HEK293 (cell line): ENCODE measurements at regions of chr6 and their contacts with region 1.

Region 1: GRCh38 chr6:8481718-8482117 is 46.4 kb upstream of the SLC35B3 start:
- H3K4me3 ChIP-seq: no peak overlapping the region
- H3K27ac ChIP-seq: no peak overlapping the region
- H3K4me1 ChIP-seq: no peaks in the 10 kb centered on the region
- CTCF ChIP-seq: no peak

Region 2: GRCh38 chr6:8277769-8278168 is 203.9 kb before region 1 on chr6:
- CTCF ChIA-PET with region 1: no interaction called
- POLR2A ChIA-PET with region 1: no interaction called
- H3K4me3 ChIP-seq: no peak overlapping the region
- H3K27ac ChIP-seq: no peak overlapping the region
- H3K4me1 ChIP-seq: no peaks in the 10 kb centered on the region; the same call in 1 of the 2 replicates
- CTCF ChIP-seq: no peak

Region 3: GRCh38 chr6:8492536-8493133 is 10.9 kb after region 1 on chr6:
- CTCF ChIA-PET with region 1: interaction called, 10 read pairs
- POLR2A ChIA-PET with region 1: no interaction called
- H3K4me3 ChIP-seq: no peak overlapping the region
- H3K27ac ChIP-seq: no peak overlapping the region
- H3K4me1 ChIP-seq: no peaks in the 10 kb centered on the region
- CTCF ChIP-seq: no peak

Region 4: DNA sequence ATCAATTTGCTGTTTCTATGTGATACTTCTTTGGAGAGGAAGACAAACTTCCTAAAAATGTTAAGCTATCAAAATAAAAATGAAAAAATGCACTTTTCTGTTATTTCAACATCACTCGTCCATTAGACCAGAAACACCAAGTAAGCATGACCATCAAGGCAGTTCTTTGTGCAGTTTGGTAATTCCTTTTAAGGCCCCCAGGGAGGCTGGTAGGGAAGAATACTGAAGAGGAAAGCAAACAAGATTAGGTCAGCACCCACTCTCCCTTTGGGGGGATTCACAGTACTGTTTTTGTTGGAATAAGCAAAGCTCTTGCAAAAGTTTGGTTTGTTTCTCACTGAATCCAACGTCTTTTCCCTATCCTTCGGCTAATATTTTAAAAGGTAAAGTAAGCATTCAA is 160.4 kb after region 1 on chr6:
- CTCF ChIA-PET with region 1: no interaction called
- POLR2A ChIA-PET with region 1: no interaction called
- H3K4me3 ChIP-seq: no peak overlapping the region
- H3K27ac ChIP-seq: no peak overlapping the region
- H3K4me1 ChIP-seq: 0 out of 2 replicates have a peak, but pooled peaks cover 4% of the 10 kb centered on the region
- CTCF ChIP-seq: no peak